ENCODE measurements at regions of chr17 and their contacts with region 1.

Region 1: GRCh38 chr17:77914385-77915254 is 43.9 kb upstream of the TNRC6C start:
- DNase-seq: peak; percentile 56
- ATAC-seq: no peak
- H3K4me3 ChIP-seq: no peak overlapping the region
- H3K4me3 Mint-ChIP-seq: no peak overlapping the region
- H3K27ac ChIP-seq: no peak overlapping the region
- H3K27ac Mint-ChIP-seq: no peak overlapping the region
- H3K4me1 ChIP-seq: peaks cover 18 to 28% of the 10 kb centered on the region in 2 donors
- H3K4me1 Mint-ChIP-seq: peaks cover 24% of the 10 kb centered on the region
- H3K27me3 ChIP-seq: peaks cover 0 to 51% (median 28%) of the 10 kb centered on the region in 4 experiments
- H3K27me3 Mint-ChIP-seq: peaks cover 66% of the 10 kb centered on the region
- CTCF ChIP-seq: no peak

Region 2: DNA sequence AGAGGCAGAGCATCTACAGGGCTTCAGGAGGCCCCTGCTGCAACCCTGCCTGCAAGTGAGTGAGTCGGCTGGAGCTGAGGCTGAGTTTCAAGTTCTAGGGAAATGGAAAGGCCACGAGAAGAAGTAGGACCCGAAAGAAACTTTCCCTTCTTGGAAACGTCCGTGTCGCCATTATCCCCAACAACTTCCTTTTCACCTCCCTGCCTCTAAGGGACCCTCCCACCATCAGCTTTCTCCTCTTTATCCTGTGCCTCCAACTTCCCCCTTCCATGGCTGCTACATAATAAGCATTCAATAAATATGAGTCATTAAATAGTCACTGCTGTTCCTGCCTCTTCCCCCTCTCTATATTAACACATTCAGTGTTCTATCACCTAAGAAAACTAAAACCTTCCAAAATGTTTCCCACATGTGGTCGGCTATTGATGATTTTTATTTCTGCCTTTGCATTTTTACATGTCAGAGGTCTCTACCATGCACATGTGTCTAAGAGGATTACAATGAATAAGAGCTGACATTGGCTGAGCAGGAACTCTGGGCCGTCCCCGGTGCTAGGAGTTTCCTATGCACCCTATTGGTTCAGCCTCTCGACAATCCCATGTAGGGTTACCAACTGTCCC is 72.0 kb before region 1 on chr17:
- CTCF ChIA-PET with region 1: interaction called, 3 read pairs
- POLR2A ChIA-PET with region 1: interaction called, 5 read pairs
- intact Hi-C with region 1: loop called (anchors 1 kb)
- DNase-seq: no peak
- ATAC-seq: no peak
- H3K4me3 ChIP-seq: no peak overlapping the region
- H3K4me3 Mint-ChIP-seq: no peak overlapping the region
- H3K27ac ChIP-seq: no peak overlapping the region
- H3K27ac Mint-ChIP-seq: no peak overlapping the region
- H3K4me1 ChIP-seq: peaks cover 43 to 62% of the 10 kb centered on the region in 2 donors
- H3K4me1 Mint-ChIP-seq: peaks cover 45% of the 10 kb centered on the region
- H3K27me3 ChIP-seq: peaks cover 0 to 71% (median 25%) of the 10 kb centered on the region in 4 experiments
- H3K27me3 Mint-ChIP-seq: peaks cover 50% of the 10 kb centered on the region
- CTCF ChIP-seq: no peak

Region 3: DNA sequence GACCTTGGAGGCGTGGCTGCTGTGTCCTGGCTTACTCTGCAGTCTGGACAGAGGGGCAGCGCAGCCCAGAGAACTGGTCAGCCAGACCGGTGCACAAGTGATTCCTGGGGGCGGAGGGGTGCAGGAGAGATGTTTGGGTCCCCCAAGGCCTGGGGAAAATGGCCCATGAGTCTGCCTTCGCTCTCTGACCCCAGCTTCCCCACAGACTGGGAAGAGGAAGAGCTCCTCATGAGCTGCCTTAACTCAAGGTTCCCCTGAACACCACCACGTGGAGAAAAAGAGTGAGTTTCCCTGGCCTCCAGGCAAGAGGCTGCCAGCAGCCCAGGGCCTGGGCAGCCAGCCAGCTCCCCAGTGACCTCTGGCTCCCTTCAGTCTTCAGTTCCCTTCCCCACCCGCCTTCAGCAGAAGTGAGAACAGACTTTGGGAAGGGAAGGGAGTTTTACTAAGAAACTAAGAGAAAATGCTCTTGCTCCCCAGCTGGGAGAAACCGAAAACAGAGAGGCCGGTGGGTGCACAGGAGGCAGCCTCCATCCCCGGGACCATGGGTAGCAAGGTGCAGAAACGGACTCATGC is 229.6 kb after region 1 on chr17:
- CTCF ChIA-PET with region 1: no interaction called
- POLR2A ChIA-PET with region 1: no interaction called
- intact Hi-C with region 1: no loop called
- DNase-seq: peak; percentile 43
- ATAC-seq: no peak
- H3K4me3 ChIP-seq: no peak overlapping the region
- H3K4me3 Mint-ChIP-seq: peak overlapping the region; percentile 23
- H3K27ac ChIP-seq: peak overlapping the region; percentile 38 to 57
- H3K27ac Mint-ChIP-seq: peak overlapping the region; percentile 89
- H3K4me1 ChIP-seq: peaks cover 81 to 94% of the 10 kb centered on the region in 2 donors
- H3K4me1 Mint-ChIP-seq: peaks cover 80% of the 10 kb centered on the region
- H3K27me3 ChIP-seq: no peaks in the 10 kb centered on the region
- H3K27me3 Mint-ChIP-seq: no peaks in the 10 kb centered on the region
- CTCF ChIP-seq: no peak